ENCODE measurements at regions of chrX and their contacts with region 1.

Region 1: DNA sequence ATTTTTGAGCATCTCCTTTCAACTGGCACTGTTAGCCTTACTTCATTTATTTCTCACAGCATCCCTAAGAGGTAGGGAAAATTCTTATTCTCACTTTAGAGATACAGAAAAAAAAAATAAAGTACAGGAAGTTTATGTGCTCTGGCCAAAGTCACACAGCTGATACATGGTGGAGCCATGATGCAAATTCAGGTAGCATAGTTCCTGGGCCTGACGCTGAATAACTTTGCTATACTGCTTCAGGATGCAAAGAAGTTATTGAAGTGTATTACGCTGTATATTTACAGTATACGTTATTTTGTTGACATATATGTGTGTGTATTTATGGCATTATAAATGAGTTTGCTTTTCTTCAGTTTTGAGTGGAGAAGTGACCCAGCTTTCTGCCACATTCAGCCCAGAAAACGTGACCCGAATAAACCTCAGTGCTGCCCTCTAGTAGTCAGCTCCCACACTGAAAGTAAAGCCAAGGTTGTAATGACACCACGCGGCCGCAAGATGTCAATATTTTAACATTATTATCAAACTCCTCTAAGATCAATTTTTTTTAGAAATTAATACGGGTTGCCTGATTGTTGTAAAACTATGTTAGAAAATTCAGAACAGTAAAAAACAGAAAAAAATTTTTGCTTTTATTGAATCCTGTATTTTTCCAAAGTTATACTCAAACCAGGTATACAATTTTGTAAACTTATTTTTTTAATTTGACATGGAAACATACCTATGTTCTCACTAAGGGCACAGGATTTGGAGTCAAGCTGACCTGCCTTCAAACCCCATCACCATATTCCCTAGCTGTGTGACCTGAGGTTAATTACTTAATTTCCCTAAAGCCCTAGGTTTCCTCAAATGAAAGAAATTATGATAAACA is 3.8 kb upstream of the GUCY2F start:
- DNase-seq: peak; percentile 31
- H3K4me3 Mint-ChIP-seq: no peak overlapping the region
- H3K27ac Mint-ChIP-seq: no peak overlapping the region
- H3K4me1 Mint-ChIP-seq: no peaks in the 10 kb centered on the region
- H3K27me3 Mint-ChIP-seq: peaks cover 12% of the 10 kb centered on the region

Region 2: DNA sequence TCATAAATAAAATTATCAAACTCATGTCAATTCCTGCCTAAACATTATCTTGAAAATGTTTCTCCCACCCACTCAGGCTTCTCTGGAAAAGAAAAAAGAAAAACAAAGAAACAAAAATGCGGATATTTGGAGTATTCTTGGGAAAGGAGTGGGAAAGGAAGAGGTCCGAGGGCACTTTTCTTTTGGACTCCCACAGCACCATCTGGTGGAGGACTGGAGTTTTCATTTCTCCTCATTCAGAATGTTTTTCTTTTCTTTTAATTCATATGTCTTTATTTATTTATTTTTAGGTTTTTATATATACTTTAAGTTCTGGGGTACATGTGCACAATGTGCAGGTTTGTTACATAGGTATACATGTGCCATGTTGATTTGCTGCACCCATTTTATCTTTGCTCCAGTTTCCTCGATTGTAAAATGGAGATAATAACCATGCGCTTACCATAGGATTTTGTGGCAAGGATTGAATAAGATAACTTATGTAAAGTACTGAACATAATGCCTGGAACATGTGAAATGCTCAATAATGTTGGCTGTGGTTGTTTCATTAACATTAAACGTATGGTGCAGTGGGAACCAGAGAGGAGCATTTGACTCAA is 147.3 kb after region 1 on chrX:
- intact Hi-C with region 1: loop called (anchors 5 kb)
- DNase-seq: no peak
- H3K4me3 Mint-ChIP-seq: no peak overlapping the region
- H3K27ac Mint-ChIP-seq: no peak overlapping the region
- H3K4me1 Mint-ChIP-seq: peaks cover 7% of the 10 kb centered on the region
- H3K27me3 Mint-ChIP-seq: no peaks in the 10 kb centered on the region

Region 3: DNA sequence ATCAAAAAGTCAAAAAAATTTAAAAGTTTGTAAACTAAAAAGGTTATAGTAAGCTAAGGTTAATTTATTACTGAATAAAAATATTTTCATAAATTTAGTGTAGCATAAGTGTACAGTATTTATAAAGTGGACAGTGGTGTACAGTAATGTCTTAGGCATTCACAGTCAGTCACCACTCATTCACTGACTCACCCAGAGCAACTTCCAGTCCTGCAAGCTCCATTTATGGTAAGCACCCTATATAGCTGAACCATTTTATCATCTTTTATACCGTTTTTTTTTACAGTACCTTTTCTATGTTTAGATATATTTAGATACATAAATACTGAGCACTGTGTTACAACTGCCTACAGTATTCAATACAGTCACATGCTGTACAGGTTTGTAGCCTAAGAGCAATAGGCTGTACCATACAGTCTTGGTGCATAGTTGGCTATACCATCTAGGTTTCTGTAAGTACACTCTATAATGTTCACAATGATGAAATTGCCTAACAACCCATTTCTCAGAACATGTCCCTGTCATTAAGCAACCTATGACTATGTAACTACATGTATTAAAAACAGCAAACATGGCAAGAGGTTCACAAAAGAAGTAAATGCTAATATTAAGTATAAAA is 228.7 kb after region 1 on chrX:
- intact Hi-C with region 1: loop called (anchors 10 kb)
- DNase-seq: no peak
- H3K4me3 Mint-ChIP-seq: no peak overlapping the region
- H3K27ac Mint-ChIP-seq: no peak overlapping the region
- H3K4me1 Mint-ChIP-seq: peaks cover 30% of the 10 kb centered on the region
- H3K27me3 Mint-ChIP-seq: no peaks in the 10 kb centered on the region

Region 4: DNA sequence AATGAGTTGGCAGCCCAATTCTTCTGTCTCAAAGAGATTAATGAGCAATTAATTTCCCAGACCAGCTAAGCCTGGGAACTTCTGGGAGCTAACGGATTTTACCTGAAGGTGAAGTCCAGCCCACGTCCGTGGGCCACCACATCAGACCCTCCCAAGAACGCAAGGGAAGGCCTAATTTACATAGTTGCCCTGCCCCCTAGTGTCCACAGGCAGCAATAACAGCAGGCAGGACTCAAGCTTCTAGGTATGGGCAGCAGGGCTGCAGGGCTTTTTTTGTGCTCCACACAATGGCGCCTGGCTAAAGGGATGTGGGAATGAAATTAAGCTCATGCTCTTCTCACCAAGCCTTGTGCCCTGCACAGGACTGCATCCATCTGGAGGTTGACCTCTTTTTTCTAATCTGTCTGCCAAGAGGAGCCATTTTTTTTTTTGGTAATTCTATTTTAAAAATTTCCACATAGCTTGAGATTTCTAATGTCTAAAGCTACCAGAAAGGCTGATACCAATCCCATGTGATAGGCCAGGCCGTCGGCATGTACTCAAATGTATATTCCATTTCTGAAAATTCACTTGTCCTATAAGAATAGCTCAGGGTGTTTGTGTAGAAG is 405.3 kb after region 1 on chrX:
- intact Hi-C with region 1: loop called (anchors 2 kb)
- DNase-seq: peak; percentile 13
- H3K4me3 Mint-ChIP-seq: no peak overlapping the region
- H3K27ac Mint-ChIP-seq: no peak overlapping the region
- H3K4me1 Mint-ChIP-seq: peaks cover 5% of the 10 kb centered on the region
- H3K27me3 Mint-ChIP-seq: peaks cover 3% of the 10 kb centered on the region

Region 5: DNA sequence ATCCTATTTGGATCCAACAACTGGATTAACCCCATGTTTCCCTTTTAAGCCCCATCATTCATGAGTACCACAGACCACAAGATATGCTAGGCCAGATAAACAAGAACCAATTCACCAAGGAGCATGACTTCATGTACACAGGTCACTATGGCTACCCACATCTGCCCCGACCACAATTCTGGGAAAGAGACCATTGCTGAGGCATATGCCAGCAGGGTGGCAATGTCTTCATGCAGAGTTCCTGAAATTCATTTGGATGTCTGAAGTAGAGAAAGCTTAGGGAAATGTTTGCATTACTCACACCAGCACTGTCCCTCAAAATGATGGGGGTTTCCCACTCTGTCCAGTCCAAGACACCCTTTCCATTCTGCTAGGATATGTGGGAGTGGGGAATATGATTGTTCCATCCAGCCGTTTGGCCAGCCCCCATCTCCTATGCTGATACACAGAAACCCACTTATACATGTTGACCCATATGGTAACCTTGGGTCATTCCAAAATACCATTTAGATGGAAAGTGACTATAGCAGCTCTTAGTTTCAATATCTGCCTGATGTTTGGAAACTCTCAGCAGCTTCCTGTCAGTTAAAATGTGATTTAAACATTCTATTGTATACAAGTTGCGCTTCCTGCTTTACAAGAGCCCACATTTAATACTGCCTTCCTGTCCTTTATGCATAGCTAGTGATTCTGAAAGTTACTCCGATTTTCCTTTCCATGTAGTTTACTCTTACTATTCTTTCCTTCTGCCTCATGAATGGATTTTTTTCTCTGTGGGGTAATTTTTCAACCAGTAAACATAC is 703.3 kb after region 1 on chrX:
- intact Hi-C with region 1: no loop called
- DNase-seq: no peak
- H3K4me3 Mint-ChIP-seq: no peak overlapping the region
- H3K27ac Mint-ChIP-seq: peak overlapping the region; percentile 66
- H3K4me1 Mint-ChIP-seq: peaks cover 27% of the 10 kb centered on the region
- H3K27me3 Mint-ChIP-seq: no peaks in the 10 kb centered on the region